ENCODE measurements at regions of chr2 and their contacts with region 1.

Region 1: GRCh38 chr2:165529130-165529529 is 59.6 kb downstream of the CSRNP3 start:
- DNase-seq: no peak
- ATAC-seq: peak; percentile 28
- H3K4me3 Mint-ChIP-seq: no peak overlapping the region
- H3K27ac Mint-ChIP-seq: no peak overlapping the region
- H3K4me1 Mint-ChIP-seq: peaks cover 4% of the 10 kb centered on the region
- H3K27me3 Mint-ChIP-seq: peaks cover 6% of the 10 kb centered on the region
- CTCF ChIP-seq: no peak

Region 2: GRCh38 chr2:165462443-165462842 is 66.7 kb before region 1 on chr2:
- CTCF ChIA-PET with region 1: no interaction called
- POLR2A ChIA-PET with region 1: interaction called, 10 read pairs
- intact Hi-C with region 1: no loop called
- DNase-seq: no peak
- ATAC-seq: no peak
- H3K4me3 Mint-ChIP-seq: no peak overlapping the region
- H3K27ac Mint-ChIP-seq: no peak overlapping the region
- H3K4me1 Mint-ChIP-seq: no peaks in the 10 kb centered on the region
- H3K27me3 Mint-ChIP-seq: peaks cover 4% of the 10 kb centered on the region
- CTCF ChIP-seq: no peak

Region 3: GRCh38 chr2:165634855-165635254 is 105.7 kb after region 1 on chr2:
- CTCF ChIA-PET with region 1: no interaction called
- POLR2A ChIA-PET with region 1: no interaction called
- intact Hi-C with region 1: no loop called
- DNase-seq: no peak
- ATAC-seq: no peak
- H3K4me3 Mint-ChIP-seq: no peak overlapping the region
- H3K27ac Mint-ChIP-seq: no peak overlapping the region
- H3K4me1 Mint-ChIP-seq: no peaks in the 10 kb centered on the region
- H3K27me3 Mint-ChIP-seq: no peaks in the 10 kb centered on the region
- CTCF ChIP-seq: no peak

Measured in activated B cell treated with CpG ODN at 0.5 μM for 24 hours (primary cell).